ENCODE measurements at regions of chr17 and their contacts with region 1.

Region 1: GRCh38 chr17:68035523-68036303 is at the start of gene KPNA2:
- DNase-seq: peak; percentile 94 to 96 (median 95)
- ATAC-seq: peak; percentile 96 to 97 (median 96)
- H3K4me3 ChIP-seq: peak within 1 kb of the TSS; percentile 70 to 99 (median 88)
- H3K27ac ChIP-seq: peak within 1 kb of the TSS in 11 of 12 donors; percentile 21 to 92 (median 79)
- H3K4me1 ChIP-seq: peaks cover 0 to 24% (median 15%) of the 10 kb centered on the region in 12 donors
- H3K27me3 ChIP-seq: no peaks in the 10 kb centered on the region
- CTCF ChIP-seq: no peak
- POLR2A ChIP-seq: peak; percentile 36 to 91
- total RNA-seq, gene KPNA2: 12.6 to 50.7 (median 20.4) TPM

Region 2: GRCh38 chr17:67993596-67994361 is 41.9 kb before region 1 on chr17:
- intact Hi-C with region 1: loop called in 1 of 10 experiments (anchors 5 kb)
- DNase-seq: peak; percentile 87 to 94 (median 91)
- ATAC-seq: peak; percentile 60 to 87 (median 79)
- H3K4me3 ChIP-seq: peak overlapping the region; percentile 56 to 98 (median 78)
- H3K27ac ChIP-seq: peak overlapping the region; percentile 88 to 96 (median 94)
- H3K4me1 ChIP-seq: peaks cover 2 to 38% (median 15%) of the 10 kb centered on the region in 12 donors
- H3K27me3 ChIP-seq: peaks cover 0 to 3% (median 0%) of the 10 kb centered on the region in 9 donors
- CTCF ChIP-seq: no peak
- POLR2A ChIP-seq: peak in 1 of 2 donors; percentile 56

Region 3: GRCh38 chr17:68089887-68090286 is 54.2 kb after region 1 on chr17:
- intact Hi-C with region 1: loop called in 1 of 10 experiments (anchors 10 kb)
- DNase-seq: peak in 4 of 5 donors; percentile 49 to 68 (median 60)
- ATAC-seq: peak; percentile 76 to 92 (median 84)
- H3K4me3 ChIP-seq: no peak overlapping the region
- H3K27ac ChIP-seq: peak overlapping the region in 2 of 12 donors; percentile 31 to 42
- H3K4me1 ChIP-seq: peaks cover 0 to 43% (median 3%) of the 10 kb centered on the region in 12 donors
- H3K27me3 ChIP-seq: no peaks in the 10 kb centered on the region
- CTCF ChIP-seq: no peak
- POLR2A ChIP-seq: no peak

Region 4: GRCh38 chr17:68101075-68101992 is 65.6 kb after region 1 on chr17:
- intact Hi-C with region 1: loop called in 3 of 10 experiments (anchors 5 to 10 kb)
- DNase-seq: peak; percentile 95 to 99 (median 96)
- ATAC-seq: peak; percentile 99 to 100 (median 100)
- H3K4me3 ChIP-seq: peak overlapping the region; percentile 69 to 99 (median 80)
- H3K27ac ChIP-seq: peak overlapping the region; percentile 73 to 98 (median 93)
- H3K4me1 ChIP-seq: peaks cover 0 to 23% (median 14%) of the 10 kb centered on the region in 12 donors
- H3K27me3 ChIP-seq: no peaks in the 10 kb centered on the region
- CTCF ChIP-seq: no peak
- POLR2A ChIP-seq: peak; percentile 36 to 83

Measured in heart left ventricle (tissue), 16 donors.